GM23248 (cell line): ENCODE measurements at regions of chr15 and their contacts with region 1.

Region 1: DNA sequence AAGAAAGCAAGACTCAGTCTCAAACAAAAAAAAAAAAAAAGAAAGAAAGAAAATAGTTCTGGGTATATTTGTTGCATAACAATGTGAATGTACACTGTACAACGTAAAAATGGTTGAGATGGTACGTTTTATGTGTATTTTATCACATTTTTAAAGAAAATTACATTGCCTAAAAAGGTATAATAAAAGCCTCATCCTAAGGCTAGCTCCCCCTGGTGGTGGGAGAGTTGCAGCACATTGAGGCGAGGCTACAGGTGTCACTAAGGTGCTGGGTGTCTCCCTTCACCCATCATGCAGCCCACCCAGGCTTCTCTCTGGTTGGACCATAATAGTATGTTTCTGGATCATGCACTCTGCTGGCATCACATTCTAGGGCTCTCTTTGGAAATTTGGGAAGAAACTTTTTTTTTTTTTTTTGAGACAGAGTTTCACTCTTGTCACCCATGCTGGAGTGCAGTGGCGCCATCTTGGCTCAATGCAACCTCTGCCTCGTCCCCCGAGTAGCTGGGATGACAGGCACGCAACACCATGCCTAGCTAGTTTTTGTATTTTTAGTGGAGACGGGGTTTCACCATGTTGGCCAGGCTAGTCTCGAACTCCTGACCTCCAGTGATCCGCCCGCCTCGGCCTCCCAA is 12.4 kb upstream of the RAB11A start:
- DNase-seq: peak; percentile 72
- H3K4me3 ChIP-seq: no peak overlapping the region
- H3K27ac ChIP-seq: no peak overlapping the region
- H3K4me1 ChIP-seq: no peaks in the 10 kb centered on the region
- H3K27me3 ChIP-seq: no peaks in the 10 kb centered on the region

Region 2: GRCh38 chr15:65638681-65639089 is 218.3 kb before region 1 on chr15:
- in situ Hi-C with region 1: loop called (anchors 10 kb)
- DNase-seq: peak; percentile 82
- H3K4me3 ChIP-seq: peak overlapping the region; percentile 27; the same call in 1 of the 2 replicates
- H3K27ac ChIP-seq: no peak overlapping the region
- H3K4me1 ChIP-seq: peaks cover 17% of the 10 kb centered on the region
- H3K27me3 ChIP-seq: no peaks in the 10 kb centered on the region